Panc1 (cell line): ENCODE measurements at regions of chr19 and their contacts with region 1.

Region 1: GRCh38 chr19:15289673-15290072 is 42.7 kb downstream of the BRD4 start:
- DNase-seq: no peak
- ATAC-seq: no peak
- H3K4me3 ChIP-seq: no peak overlapping the region
- H3K27ac ChIP-seq: no peak overlapping the region
- H3K4me1 ChIP-seq: peaks cover 47% of the 10 kb centered on the region
- H3K27me3 ChIP-seq: no peaks in the 10 kb centered on the region
- CTCF ChIP-seq: no peak

Region 2: GRCh38 chr19:15022752-15023151 is 266.9 kb before region 1 on chr19:
- CTCF ChIA-PET with region 1: no interaction called
- POLR2A ChIA-PET with region 1: no interaction called
- in situ Hi-C with region 1: no loop called
- intact Hi-C with region 1: no loop called
- DNase-seq: no peak
- ATAC-seq: no peak
- H3K4me3 ChIP-seq: no peak overlapping the region
- H3K27ac ChIP-seq: no peak overlapping the region
- H3K4me1 ChIP-seq: no peaks in the 10 kb centered on the region
- H3K27me3 ChIP-seq: no peaks in the 10 kb centered on the region
- CTCF ChIP-seq: no peak

Region 3: DNA sequence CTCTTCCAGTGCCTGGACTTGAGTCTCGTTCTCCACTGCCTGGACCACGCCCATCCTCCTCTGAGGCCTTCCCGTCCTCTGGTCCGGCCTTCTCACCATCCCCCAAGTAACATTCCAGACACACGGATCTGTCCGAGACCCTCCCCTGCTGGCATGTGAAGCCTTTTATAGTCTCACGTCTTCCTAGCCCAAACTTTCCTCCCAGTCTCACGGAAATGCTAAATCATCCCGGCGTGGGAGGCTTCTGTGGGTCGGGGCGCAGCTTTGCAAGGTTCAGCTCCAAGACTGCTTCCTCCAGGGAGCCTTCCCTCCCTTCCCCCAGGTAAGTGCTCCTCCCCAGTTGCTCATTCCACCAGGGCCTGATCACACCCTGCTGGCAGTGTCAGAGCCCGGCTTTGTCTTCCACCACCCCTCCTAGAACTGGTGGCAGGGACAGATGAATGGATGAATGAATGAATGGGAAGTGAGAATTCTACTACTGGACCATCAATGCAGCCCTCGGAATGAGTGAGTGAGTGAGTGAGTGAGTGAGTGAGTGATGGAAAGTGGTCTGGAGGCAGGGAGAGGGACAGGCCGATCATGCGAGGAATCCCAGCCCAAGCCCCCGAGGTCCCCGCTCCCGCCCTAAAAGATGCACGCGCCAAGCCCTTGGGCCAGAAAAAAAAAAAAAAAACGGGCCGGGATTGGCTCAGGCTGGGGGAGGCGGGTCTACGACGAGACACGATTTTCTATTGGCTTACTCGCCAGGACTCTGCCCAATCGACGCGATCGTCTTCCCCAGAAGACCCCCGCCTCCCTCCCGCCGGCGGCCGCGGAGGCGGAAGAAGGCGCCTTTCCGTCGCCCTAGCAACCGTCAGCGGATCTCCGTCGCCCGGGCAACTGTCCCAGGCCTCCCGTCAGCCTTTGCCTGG is 66.7 kb before region 1 on chr19:
- CTCF ChIA-PET with region 1: no interaction called
- POLR2A ChIA-PET with region 1: no interaction called
- in situ Hi-C with region 1: no loop called
- intact Hi-C with region 1: no loop called
- DNase-seq: peak; percentile 24
- ATAC-seq: peak; percentile 97
- H3K4me3 ChIP-seq: peak overlapping the region; percentile 54 to 56
- H3K27ac ChIP-seq: peak overlapping the region; percentile 65
- H3K4me1 ChIP-seq: peaks cover 6% of the 10 kb centered on the region
- H3K27me3 ChIP-seq: no peaks in the 10 kb centered on the region
- CTCF ChIP-seq: no peak

Region 4: DNA sequence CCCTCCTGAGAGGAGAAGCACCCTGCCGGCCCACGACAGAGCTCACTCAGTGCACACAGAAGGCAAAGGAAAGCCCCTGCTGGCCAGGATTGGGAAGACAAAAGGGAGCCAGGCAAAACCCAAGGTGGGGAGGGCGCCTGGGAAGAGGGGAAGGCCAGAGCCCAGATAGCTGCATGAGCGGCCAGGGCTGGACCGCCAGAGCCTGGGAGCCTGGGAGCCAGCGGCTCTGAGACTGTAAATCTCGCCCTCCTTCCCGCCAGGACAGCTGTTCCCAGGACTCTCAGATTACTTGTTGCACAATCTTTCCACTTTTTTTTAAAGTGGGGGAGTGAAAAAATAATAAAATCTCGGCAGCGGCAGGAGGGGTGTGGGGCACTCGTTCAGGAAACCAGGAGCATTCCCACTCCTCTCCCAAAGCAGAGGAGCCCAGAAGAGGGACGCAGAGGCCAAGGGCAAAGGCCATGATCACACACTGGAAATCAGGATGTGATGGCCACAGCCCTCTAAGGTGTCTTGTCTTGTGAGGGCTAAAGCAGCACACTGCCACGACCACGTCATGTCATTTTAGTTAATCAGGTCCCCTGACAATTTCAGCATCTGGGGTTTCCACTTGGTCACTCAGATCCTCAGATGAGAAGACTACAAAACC is 37.8 kb before region 1 on chr19:
- CTCF ChIA-PET with region 1: no interaction called
- POLR2A ChIA-PET with region 1: no interaction called
- in situ Hi-C with region 1: no loop called
- intact Hi-C with region 1: no loop called
- DNase-seq: no peak
- ATAC-seq: peak; percentile 80
- H3K4me3 ChIP-seq: no peak overlapping the region
- H3K27ac ChIP-seq: no peak overlapping the region
- H3K4me1 ChIP-seq: no peaks in the 10 kb centered on the region; the same call in none of the 2 replicates
- H3K27me3 ChIP-seq: no peaks in the 10 kb centered on the region
- CTCF ChIP-seq: no peak; the same call in 1 of the 2 replicates

Region 5: GRCh38 chr19:15439078-15439799 is 149.6 kb after region 1 on chr19:
- CTCF ChIA-PET with region 1: no interaction called
- POLR2A ChIA-PET with region 1: interaction called, 11 read pairs
- in situ Hi-C with region 1: no loop called
- intact Hi-C with region 1: no loop called
- DNase-seq: no peak
- ATAC-seq: no peak
- H3K4me3 ChIP-seq: no peak overlapping the region
- H3K27ac ChIP-seq: no peak overlapping the region
- H3K4me1 ChIP-seq: no peaks in the 10 kb centered on the region
- H3K27me3 ChIP-seq: no peaks in the 10 kb centered on the region
- CTCF ChIP-seq: no peak

Region 6: DNA sequence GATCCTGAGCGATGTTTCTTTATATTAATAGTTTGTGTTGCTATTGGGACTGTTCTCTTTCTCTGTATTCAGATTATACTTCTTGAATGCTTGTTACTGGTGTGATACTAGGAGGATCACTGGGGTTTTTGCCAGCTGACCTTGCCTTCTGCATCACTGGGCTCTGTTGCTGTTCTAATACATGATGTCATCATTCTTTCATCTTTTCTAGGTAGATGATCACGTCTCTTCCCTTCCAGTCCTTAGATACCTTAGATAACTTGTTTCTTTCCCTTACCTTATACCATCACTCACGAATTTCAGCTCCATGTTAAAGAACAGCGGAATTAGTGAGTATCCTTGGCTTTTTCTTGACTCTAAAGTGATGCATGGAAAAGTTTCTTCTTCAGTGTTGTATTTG is 448.1 kb after region 1 on chr19 and contains the start of gene OR10H3:
- CTCF ChIA-PET with region 1: no interaction called
- POLR2A ChIA-PET with region 1: no interaction called
- in situ Hi-C with region 1: no loop called
- intact Hi-C with region 1: no loop called
- DNase-seq: no peak
- ATAC-seq: no peak
- H3K4me3 ChIP-seq: no peak within 1 kb of the TSS
- H3K27ac ChIP-seq: no peak within 1 kb of the TSS
- H3K4me1 ChIP-seq: no peaks in the 10 kb centered on the region
- H3K27me3 ChIP-seq: no peaks in the 10 kb centered on the region; the same call in 1 of the 2 replicates
- CTCF ChIP-seq: no peak
- total RNA-seq, gene OR10H3: not detected